ENCODE measurements at regions of chr13 and their contacts with region 1.

Region 1: DNA sequence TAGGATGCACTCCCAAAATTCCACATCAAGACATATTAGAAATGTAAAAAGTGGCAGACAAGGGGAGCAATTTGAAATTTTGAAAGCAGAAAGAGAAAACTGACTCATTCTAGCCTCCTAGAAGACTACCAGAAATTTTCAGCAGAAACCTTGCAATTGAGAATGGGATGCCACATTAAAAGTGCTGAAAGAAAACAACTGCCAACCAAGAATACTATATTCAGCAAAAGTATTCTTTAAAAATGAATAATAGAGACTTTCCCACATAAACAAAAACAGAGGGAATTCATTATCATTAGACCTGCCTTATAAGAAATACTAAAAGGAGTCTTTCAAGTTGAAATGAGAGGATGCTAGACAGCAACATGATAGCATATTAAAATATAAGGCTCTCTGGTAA is 78.3 kb upstream of the HTR2A start:
- DNase-seq: no peak
- ATAC-seq: no peak
- H3K4me3 ChIP-seq: no peak overlapping the region
- H3K27ac ChIP-seq: no peak overlapping the region
- H3K4me1 ChIP-seq: no peaks in the 10 kb centered on the region
- H3K27me3 ChIP-seq: no peaks in the 10 kb centered on the region
- CTCF ChIP-seq: no peak
- POLR2A ChIP-seq: no peak
- RAD21 ChIP-seq: no peak

Region 2: DNA sequence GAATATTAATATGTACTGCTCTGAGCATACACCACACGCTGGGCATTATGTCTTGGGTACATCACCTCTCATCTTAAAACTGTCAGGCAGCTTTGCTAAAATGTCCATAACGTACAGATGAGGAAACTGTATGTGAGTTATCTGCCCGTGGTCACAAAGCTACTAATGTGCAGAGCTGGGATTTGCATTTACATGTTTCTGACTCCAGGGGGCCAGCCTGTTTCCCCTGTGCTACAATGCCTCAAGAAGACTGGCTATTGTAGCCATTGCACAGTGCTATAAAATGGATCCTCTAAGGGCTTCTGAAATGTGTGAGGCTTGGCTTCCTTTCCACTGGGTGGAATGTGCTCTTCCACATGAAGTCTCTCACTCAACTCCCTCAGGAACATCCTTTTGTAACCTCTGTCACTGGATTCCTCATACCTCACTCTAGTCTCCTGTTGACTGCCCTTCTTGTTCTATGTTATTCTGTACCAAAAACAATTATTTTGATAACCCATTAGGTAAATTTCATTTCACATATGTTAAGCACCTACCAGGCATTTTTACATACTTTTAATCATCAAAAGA is 17.3 kb after region 1 on chr13:
- CTCF ChIA-PET with region 1: interaction called, 10 read pairs
- POLR2A ChIA-PET with region 1: no interaction called
- RAD21 ChIA-PET with region 1: no interaction called
- intact Hi-C with region 1: no loop called
- DNase-seq: peak; percentile 16
- ATAC-seq: peak; percentile 94
- H3K4me3 ChIP-seq: no peak overlapping the region
- H3K27ac ChIP-seq: no peak overlapping the region
- H3K4me1 ChIP-seq: no peaks in the 10 kb centered on the region
- H3K27me3 ChIP-seq: peaks cover 18% of the 10 kb centered on the region
- CTCF ChIP-seq: peak in 2 of 3 experiments; percentile 47 to 50; a peak in 4 of 6 replicates
- POLR2A ChIP-seq: no peak
- RAD21 ChIP-seq: peak; percentile 14; the same call in 1 of the 2 replicates

Measured in HCT116 (cell line).